ENCODE measurements at regions of chr20 and their contacts with region 1.

Region 1: GRCh38 chr20:51510946-51511605 is 31.4 kb downstream of the NFATC2 start:
- DNase-seq: no peak
- ATAC-seq: no peak
- H3K4me3 ChIP-seq: no peak overlapping the region
- H3K27ac ChIP-seq: no peak overlapping the region
- H3K4me1 ChIP-seq: peaks cover 4% of the 10 kb centered on the region; the same call in 1 of the 2 replicates
- H3K27me3 ChIP-seq: no peaks in the 10 kb centered on the region
- CTCF ChIP-seq: no peak
- POLR2A ChIP-seq: no peak
- RAD21 ChIP-seq: no peak

Region 2: GRCh38 chr20:51372176-51372803 is 138.8 kb before region 1 on chr20:
- CTCF ChIA-PET with region 1: no interaction called
- POLR2A ChIA-PET with region 1: no interaction called
- dilution Hi-C with region 1: no loop called
- in situ Hi-C with region 1: no loop called
- intact Hi-C with region 1: no loop called
- DNase-seq: peak; percentile 74
- ATAC-seq: peak; percentile 98
- H3K4me3 ChIP-seq: no peak overlapping the region
- H3K27ac ChIP-seq: no peak overlapping the region; the same call in 1 of the 2 replicates
- H3K4me1 ChIP-seq: peaks cover 7% of the 10 kb centered on the region
- H3K27me3 ChIP-seq: no peaks in the 10 kb centered on the region
- CTCF ChIP-seq: peak; percentile 94
- POLR2A ChIP-seq: peak; percentile 48
- RAD21 ChIP-seq: peak; percentile 97

Region 3: GRCh38 chr20:51467956-51468626 is 43.0 kb before region 1 on chr20:
- CTCF ChIA-PET with region 1: no interaction called
- POLR2A ChIA-PET with region 1: no interaction called
- dilution Hi-C with region 1: no loop called
- in situ Hi-C with region 1: no loop called
- intact Hi-C with region 1: loop called (anchors 2 kb)
- DNase-seq: no peak
- ATAC-seq: no peak
- H3K4me3 ChIP-seq: no peak overlapping the region
- H3K27ac ChIP-seq: no peak overlapping the region
- H3K4me1 ChIP-seq: peaks cover 3% of the 10 kb centered on the region
- H3K27me3 ChIP-seq: no peaks in the 10 kb centered on the region
- CTCF ChIP-seq: no peak
- POLR2A ChIP-seq: no peak
- RAD21 ChIP-seq: no peak

Region 4: DNA sequence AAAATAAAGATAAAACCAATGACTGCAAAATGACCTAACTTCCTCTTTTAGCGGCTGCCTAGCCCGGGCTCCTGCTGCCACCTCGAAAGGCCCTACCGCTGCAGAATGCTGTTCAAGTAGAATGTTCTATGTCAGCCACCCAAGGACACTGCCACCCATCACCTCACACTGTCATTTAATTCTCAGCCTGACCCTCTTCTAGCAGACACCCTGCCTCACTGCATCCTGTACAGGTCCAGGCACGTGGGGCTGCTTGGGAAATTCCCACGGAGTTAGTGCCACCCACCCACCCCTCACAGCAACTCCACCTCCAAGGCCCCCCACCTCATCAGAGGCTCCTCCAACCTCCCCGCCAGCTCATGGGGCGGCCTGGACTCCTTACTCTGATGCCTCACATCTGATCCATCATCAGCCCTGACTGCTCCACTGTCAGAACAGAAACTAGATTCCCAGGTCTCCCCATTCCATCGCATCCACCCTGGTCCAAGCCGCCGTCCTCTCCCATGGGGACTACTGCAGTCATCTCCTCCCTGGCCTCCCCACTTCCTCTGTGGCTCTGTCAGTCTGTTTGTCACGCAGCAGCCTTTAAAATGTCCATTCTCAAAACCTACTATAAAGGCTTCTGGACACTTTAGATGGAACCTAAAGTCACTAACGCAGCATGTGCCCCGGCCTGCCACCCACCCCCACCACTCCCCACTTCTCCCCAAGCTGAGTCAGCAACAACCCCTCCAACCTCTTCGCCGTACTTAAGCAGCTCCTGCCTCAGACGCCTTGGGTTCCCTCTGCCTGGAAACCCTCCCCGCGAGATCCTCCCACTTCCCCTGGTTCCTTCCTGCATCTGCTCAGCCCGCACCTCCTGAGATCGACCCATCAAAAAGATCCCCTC is 14.4 kb after region 1 on chr20:
- CTCF ChIA-PET with region 1: interaction called, 5 read pairs
- POLR2A ChIA-PET with region 1: interaction called, 12 read pairs
- dilution Hi-C with region 1: no loop called
- in situ Hi-C with region 1: no loop called
- intact Hi-C with region 1: no loop called
- DNase-seq: no peak
- ATAC-seq: no peak
- H3K4me3 ChIP-seq: no peak overlapping the region
- H3K27ac ChIP-seq: no peak overlapping the region
- H3K4me1 ChIP-seq: peaks cover 7% of the 10 kb centered on the region; the same call in 1 of the 2 replicates
- H3K27me3 ChIP-seq: no peaks in the 10 kb centered on the region
- CTCF ChIP-seq: no peak
- POLR2A ChIP-seq: no peak
- RAD21 ChIP-seq: no peak

Region 5: GRCh38 chr20:51955756-51956155 is 444.7 kb after region 1 on chr20:
- CTCF ChIA-PET with region 1: no interaction called
- POLR2A ChIA-PET with region 1: no interaction called
- dilution Hi-C with region 1: no loop called
- in situ Hi-C with region 1: no loop called
- intact Hi-C with region 1: no loop called
- DNase-seq: peak; percentile 65
- ATAC-seq: peak; percentile 77
- H3K4me3 ChIP-seq: no peak overlapping the region
- H3K27ac ChIP-seq: no peak overlapping the region
- H3K4me1 ChIP-seq: no peaks in the 10 kb centered on the region
- H3K27me3 ChIP-seq: no peaks in the 10 kb centered on the region; the same call in 1 of the 2 replicates
- CTCF ChIP-seq: no peak
- POLR2A ChIP-seq: no peak
- RAD21 ChIP-seq: no peak